ENCODE measurements at regions of chr4 and their contacts with region 1.

Region 1: DNA sequence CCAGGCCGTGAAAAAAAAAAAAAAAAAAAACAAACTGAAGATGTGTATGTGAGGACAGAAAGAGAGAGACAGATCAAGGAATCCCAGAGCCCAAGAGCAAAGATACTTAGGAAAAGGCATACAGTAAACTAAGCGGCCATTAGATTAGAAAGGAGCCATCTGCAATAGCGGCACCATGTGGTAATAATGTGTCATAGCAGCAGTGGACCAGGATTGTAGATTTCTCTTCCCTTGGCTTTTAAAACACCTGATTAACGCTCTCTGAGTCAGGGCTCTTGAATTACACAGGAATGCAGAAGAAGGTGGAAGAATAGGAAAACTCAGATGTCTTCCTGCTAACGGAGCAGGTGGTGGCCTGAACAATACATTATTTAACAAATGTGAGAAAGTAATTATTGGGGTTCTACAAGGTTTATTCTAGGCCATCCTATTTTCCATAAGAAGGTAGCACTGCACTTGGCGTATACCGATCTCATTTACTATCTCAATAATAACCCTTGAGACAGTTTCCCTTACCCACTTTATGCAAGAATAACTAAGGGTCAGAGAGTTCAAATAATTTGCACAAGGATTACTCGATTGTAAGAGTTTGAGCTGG is 182.7 kb downstream of the KCNIP4 start:
- DNase-seq: no peak
- H3K4me3 ChIP-seq: no peak overlapping the region
- H3K27ac ChIP-seq: no peak overlapping the region
- H3K4me1 ChIP-seq: no peaks in the 10 kb centered on the region
- H3K27me3 ChIP-seq: no peaks in the 10 kb centered on the region
- CTCF ChIP-seq: peak; percentile 62 to 84 (median 76)
- EP300 ChIP-seq: no peak
- POLR2A ChIP-seq: no peak

Region 2: GRCh38 chr4:21517460-21517859 is 248.4 kb before region 1 on chr4:
- intact Hi-C with region 1: loop called (anchors 5 kb)
- DNase-seq: no peak
- H3K4me3 ChIP-seq: no peak overlapping the region
- H3K27ac ChIP-seq: no peak overlapping the region
- H3K4me1 ChIP-seq: no peaks in the 10 kb centered on the region
- H3K27me3 ChIP-seq: no peaks in the 10 kb centered on the region
- CTCF ChIP-seq: no peak
- EP300 ChIP-seq: no peak
- POLR2A ChIP-seq: no peak